BJ (cell line): ENCODE measurements at regions of chr2 and their contacts with region 1.

Region 1: GRCh38 chr2:121076885-121077549 is 208.0 kb downstream of the TFCP2L1 start:
- DNase-seq: no peak
- H3K4me3 ChIP-seq: no peak overlapping the region
- H3K27me3 ChIP-seq: peaks cover 3% of the 10 kb centered on the region; the same call in 1 of the 2 replicates
- CTCF ChIP-seq: peak; percentile 97

Region 2: GRCh38 chr2:121058852-121059558 is 18.0 kb before region 1 on chr2:
- CTCF ChIA-PET with region 1: interaction called, 10 read pairs
- POLR2A ChIA-PET with region 1: no interaction called
- DNase-seq: no peak
- H3K4me3 ChIP-seq: no peak overlapping the region
- H3K27me3 ChIP-seq: peaks cover 5% of the 10 kb centered on the region; the same call in 1 of the 2 replicates
- CTCF ChIP-seq: no peak

Region 3: DNA sequence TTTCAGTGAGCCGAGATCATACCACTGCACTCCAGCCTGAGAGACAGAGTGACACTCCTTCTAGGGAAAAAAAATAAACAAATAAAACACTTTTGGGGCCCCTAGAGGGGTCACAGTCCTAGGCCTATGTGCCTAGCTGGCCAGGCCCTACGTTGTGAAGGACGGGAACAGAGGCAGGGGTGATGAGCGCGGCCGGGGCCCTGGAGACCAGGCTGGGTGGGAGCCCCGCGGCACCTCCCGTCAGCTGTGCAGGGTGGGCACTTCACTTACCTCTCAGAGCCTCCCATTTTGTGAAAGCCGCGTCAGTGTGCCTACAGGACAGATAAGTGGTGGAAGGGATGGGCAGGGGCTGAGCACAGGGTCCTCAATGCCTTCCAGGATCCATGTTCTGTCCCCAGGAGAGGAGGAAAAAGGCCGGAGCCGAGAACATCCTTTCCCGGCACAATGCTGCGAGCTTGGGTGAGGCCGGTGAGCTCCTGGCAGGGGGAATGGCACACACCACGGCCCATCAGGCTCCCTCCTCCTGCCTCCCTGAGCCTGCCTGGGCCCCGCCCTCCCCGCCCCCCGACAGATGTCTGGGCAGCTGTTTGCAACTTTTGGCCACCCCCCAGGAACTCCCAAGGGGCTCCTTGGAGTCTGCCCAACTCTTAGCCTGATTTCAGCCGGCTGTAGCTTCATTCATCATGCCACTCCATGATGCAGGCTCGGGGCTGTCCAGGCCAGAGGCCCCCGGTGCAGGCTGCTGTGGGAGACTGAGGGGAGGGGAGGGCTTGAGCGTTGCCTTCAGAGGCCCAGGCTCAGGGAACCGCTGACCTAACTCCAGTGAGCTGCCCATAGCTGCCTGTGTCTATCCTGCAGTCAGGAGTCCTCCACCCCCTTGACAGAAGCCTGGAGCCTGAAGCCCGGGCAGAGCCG is 11.5 kb after region 1 on chr2:
- CTCF ChIA-PET with region 1: interaction called, 163 read pairs
- POLR2A ChIA-PET with region 1: interaction called, 3 read pairs
- DNase-seq: no peak
- H3K4me3 ChIP-seq: no peak overlapping the region
- H3K27me3 ChIP-seq: peaks cover 7% of the 10 kb centered on the region; the same call in 1 of the 2 replicates
- CTCF ChIP-seq: no peak